Caco-2 (cell line): ENCODE measurements at regions of chrX and their contacts with region 1.

Region 1: DNA sequence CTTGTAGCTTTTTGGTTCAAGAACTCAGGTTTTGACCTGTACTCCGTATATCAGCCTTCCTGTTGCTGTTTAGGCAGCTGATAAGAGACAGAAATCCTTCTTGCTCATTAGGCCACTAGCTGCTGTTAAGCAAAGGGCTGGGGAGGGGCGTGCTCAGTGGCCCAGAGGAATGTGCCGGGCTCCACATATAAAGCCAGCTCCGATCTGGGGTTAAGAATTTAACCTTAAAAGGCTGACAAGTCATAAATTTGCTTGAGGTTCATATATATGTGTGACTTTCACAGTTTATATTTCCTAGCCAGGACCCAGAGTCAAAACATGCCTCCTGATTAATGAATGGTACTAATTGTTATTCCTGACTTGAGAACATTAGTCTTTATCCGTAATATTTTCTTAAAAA is 15.3 kb downstream of the GPC3 start:
- DNase-seq: peak; percentile 73 to 83
- H3K4me3 ChIP-seq: no peak overlapping the region
- H3K4me3 Mint-ChIP-seq: peak overlapping the region; percentile 56
- H3K27ac Mint-ChIP-seq: peak overlapping the region; percentile 43
- H3K4me1 ChIP-seq: peaks cover 36% of the 10 kb centered on the region
- H3K4me1 Mint-ChIP-seq: peaks cover 35% of the 10 kb centered on the region
- H3K27me3 ChIP-seq: no peaks in the 10 kb centered on the region
- H3K27me3 Mint-ChIP-seq: no peaks in the 10 kb centered on the region
- CTCF ChIP-seq: no peak

Region 2: GRCh38 chrX:133985164-133985966 is 15.3 kb after region 1 on chrX and contains the start of gene GPC3:
- CTCF ChIA-PET with region 1: interaction called, 4 read pairs
- POLR2A ChIA-PET with region 1: interaction called, 3 read pairs
- intact Hi-C with region 1: loop called (anchors 2 kb)
- DNase-seq: peak; percentile 74 to 75
- H3K4me3 ChIP-seq: peak within 1 kb of the TSS; percentile 80
- H3K4me3 Mint-ChIP-seq: peak within 1 kb of the TSS; percentile 73
- H3K27ac Mint-ChIP-seq: peak within 1 kb of the TSS; percentile 29
- H3K4me1 ChIP-seq: peaks cover 16% of the 10 kb centered on the region
- H3K4me1 Mint-ChIP-seq: peaks cover 21% of the 10 kb centered on the region
- H3K27me3 ChIP-seq: no peaks in the 10 kb centered on the region
- H3K27me3 Mint-ChIP-seq: no peaks in the 10 kb centered on the region
- CTCF ChIP-seq: no peak
- total RNA-seq, gene GPC3: 233 and 266 TPM in 2 replicates

Region 3: DNA sequence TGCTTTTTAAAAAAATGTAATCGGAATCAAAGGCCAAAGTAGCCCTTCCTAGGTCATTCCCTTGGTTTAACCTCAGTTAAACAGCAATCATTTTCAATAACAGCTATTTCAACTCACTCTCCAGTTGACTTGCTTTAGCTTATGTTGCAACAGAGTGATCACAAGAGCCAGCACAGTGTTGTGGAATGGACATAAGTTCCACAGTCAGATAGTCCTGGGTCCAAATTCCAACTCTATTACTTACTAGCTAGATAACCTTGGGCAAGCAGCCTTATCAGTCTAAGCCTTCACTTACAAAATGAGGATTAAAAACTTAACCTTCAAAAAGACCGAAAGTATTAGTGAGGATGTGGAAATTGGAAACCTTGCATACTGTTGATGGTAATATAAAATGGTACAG is 24.5 kb after region 1 on chrX:
- CTCF ChIA-PET with region 1: interaction called, 3 read pairs
- POLR2A ChIA-PET with region 1: interaction called, 3 read pairs
- intact Hi-C with region 1: loop called (anchors 1 kb)
- DNase-seq: peak; percentile 73 to 78
- H3K4me3 ChIP-seq: no peak overlapping the region
- H3K4me3 Mint-ChIP-seq: peak overlapping the region; percentile 35
- H3K27ac Mint-ChIP-seq: peak overlapping the region; percentile 39
- H3K4me1 ChIP-seq: peaks cover 29% of the 10 kb centered on the region
- H3K4me1 Mint-ChIP-seq: peaks cover 24% of the 10 kb centered on the region
- H3K27me3 ChIP-seq: no peaks in the 10 kb centered on the region
- H3K27me3 Mint-ChIP-seq: no peaks in the 10 kb centered on the region
- CTCF ChIP-seq: no peak

Region 4: GRCh38 chrX:134006484-134007161 is 36.5 kb after region 1 on chrX:
- CTCF ChIA-PET with region 1: no interaction called
- POLR2A ChIA-PET with region 1: no interaction called
- intact Hi-C with region 1: loop called (anchors 1 kb)
- DNase-seq: peak in 1 of 2 experiments; percentile 40
- H3K4me3 ChIP-seq: no peak overlapping the region
- H3K4me3 Mint-ChIP-seq: peak overlapping the region; percentile 33
- H3K27ac Mint-ChIP-seq: peak overlapping the region; percentile 55
- H3K4me1 ChIP-seq: peaks cover 43% of the 10 kb centered on the region
- H3K4me1 Mint-ChIP-seq: peaks cover 39% of the 10 kb centered on the region
- H3K27me3 ChIP-seq: no peaks in the 10 kb centered on the region
- H3K27me3 Mint-ChIP-seq: no peaks in the 10 kb centered on the region
- CTCF ChIP-seq: no peak

Region 5: GRCh38 chrX:134032441-134032840 is 62.4 kb after region 1 on chrX:
- CTCF ChIA-PET with region 1: no interaction called
- POLR2A ChIA-PET with region 1: no interaction called
- intact Hi-C with region 1: no loop called
- DNase-seq: no peak
- H3K4me3 ChIP-seq: no peak overlapping the region
- H3K4me3 Mint-ChIP-seq: no peak overlapping the region
- H3K27ac Mint-ChIP-seq: no peak overlapping the region
- H3K4me1 ChIP-seq: no peaks in the 10 kb centered on the region
- H3K4me1 Mint-ChIP-seq: no peaks in the 10 kb centered on the region
- H3K27me3 ChIP-seq: no peaks in the 10 kb centered on the region
- H3K27me3 Mint-ChIP-seq: no peaks in the 10 kb centered on the region
- CTCF ChIP-seq: no peak